CD8-positive, alpha-beta T cell (primary cell): ENCODE measurements at regions of chr21 and their contacts with region 1.

Region 1: GRCh38 chr21:33641336-33642026 is at the start of gene CRYZL1:
- DNase-seq: peak; percentile 100
- ATAC-seq: peak; percentile 78
- H3K4me3 ChIP-seq: peak within 1 kb of the TSS; percentile 83 to 95
- H3K4me3 Mint-ChIP-seq: peak within 1 kb of the TSS; percentile 90
- H3K27ac ChIP-seq: peak within 1 kb of the TSS; percentile 89 to 92
- H3K27ac Mint-ChIP-seq: peak within 1 kb of the TSS; percentile 92
- H3K4me1 ChIP-seq: peaks cover 15% of the 10 kb centered on the region
- H3K4me1 Mint-ChIP-seq: peaks cover 41% of the 10 kb centered on the region
- H3K27me3 ChIP-seq: no peaks in the 10 kb centered on the region
- H3K27me3 Mint-ChIP-seq: peaks cover 7% of the 10 kb centered on the region
- CTCF ChIP-seq: no peak
- total RNA-seq, gene CRYZL1: 19.9 to 21.8 TPM

Region 2: GRCh38 chr21:32612075-32612998 is 1029.1 kb before region 1 on chr21 and contains the start of gene CFAP298:
- CTCF ChIA-PET with region 1: no interaction called
- POLR2A ChIA-PET with region 1: no interaction called
- intact Hi-C with region 1: loop called (anchors 5 to 10 kb)
- DNase-seq: peak; percentile 76 to 98 (median 88)
- ATAC-seq: peak; percentile 91
- H3K4me3 ChIP-seq: peak within 1 kb of the TSS; percentile 65 to 74
- H3K4me3 Mint-ChIP-seq: peak within 1 kb of the TSS; percentile 96
- H3K27ac ChIP-seq: peak within 1 kb of the TSS; percentile 79 to 96
- H3K27ac Mint-ChIP-seq: peak within 1 kb of the TSS; percentile 97
- H3K4me1 ChIP-seq: peaks cover 21% of the 10 kb centered on the region
- H3K4me1 Mint-ChIP-seq: peaks cover 27% of the 10 kb centered on the region
- H3K27me3 ChIP-seq: no peaks in the 10 kb centered on the region
- H3K27me3 Mint-ChIP-seq: no peaks in the 10 kb centered on the region
- CTCF ChIP-seq: no peak
- total RNA-seq, gene CFAP298: 7.5 to 9.1 TPM

Region 3: DNA sequence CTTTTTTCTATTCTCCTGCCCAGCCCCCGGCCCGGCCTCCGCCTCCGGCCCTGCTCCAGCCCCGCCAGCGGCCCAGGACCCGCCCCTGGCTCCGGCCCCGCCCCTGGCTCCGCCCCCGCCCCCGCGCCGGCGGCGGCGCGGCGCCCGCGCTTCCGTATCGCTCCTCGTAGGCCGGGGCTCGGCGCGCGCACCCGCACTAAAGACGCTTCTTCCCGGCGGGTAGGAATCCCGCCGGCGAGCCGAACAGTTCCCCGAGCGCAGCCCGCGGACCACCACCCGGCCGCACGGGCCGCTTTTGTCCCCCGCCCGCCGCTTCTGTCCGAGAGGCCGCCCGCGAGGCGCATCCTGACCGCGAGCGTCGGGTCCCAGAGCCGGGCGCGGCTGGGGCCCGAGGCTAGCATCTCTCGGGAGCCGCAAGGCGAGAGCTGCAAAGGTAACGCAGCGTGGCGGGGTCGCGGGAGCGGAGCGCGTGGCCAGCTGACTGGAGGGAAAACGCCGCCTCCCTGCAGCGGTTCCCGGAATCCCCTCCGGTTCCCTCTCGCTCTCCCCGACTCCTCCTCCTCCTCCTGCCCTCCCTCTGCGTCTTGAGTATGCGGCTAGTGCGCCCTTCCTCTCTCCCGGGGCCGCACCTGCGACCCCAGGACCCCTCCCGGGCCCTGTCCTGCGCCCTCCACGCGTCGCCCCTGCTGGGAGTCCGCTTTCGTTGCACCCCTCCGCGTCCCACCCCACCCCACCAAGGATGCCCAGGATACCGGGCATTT is 411.5 kb before region 1 on chr21 and contains the start of gene IFNAR2:
- CTCF ChIA-PET with region 1: no interaction called
- POLR2A ChIA-PET with region 1: no interaction called
- intact Hi-C with region 1: loop called in 1 of 2 experiments (anchors 5 kb)
- DNase-seq: peak; percentile 56 to 85 (median 74)
- ATAC-seq: peak; percentile 86
- H3K4me3 ChIP-seq: peak within 1 kb of the TSS; percentile 90 to 97
- H3K4me3 Mint-ChIP-seq: peak within 1 kb of the TSS; percentile 92
- H3K27ac ChIP-seq: peak within 1 kb of the TSS; percentile 74 to 75
- H3K27ac Mint-ChIP-seq: peak within 1 kb of the TSS; percentile 95
- H3K4me1 ChIP-seq: peaks cover 46% of the 10 kb centered on the region
- H3K4me1 Mint-ChIP-seq: peaks cover 51% of the 10 kb centered on the region
- H3K27me3 ChIP-seq: no peaks in the 10 kb centered on the region
- H3K27me3 Mint-ChIP-seq: no peaks in the 10 kb centered on the region
- CTCF ChIP-seq: no peak
- total RNA-seq, gene IFNAR2: 21.9 to 30.0 TPM

Region 4: DNA sequence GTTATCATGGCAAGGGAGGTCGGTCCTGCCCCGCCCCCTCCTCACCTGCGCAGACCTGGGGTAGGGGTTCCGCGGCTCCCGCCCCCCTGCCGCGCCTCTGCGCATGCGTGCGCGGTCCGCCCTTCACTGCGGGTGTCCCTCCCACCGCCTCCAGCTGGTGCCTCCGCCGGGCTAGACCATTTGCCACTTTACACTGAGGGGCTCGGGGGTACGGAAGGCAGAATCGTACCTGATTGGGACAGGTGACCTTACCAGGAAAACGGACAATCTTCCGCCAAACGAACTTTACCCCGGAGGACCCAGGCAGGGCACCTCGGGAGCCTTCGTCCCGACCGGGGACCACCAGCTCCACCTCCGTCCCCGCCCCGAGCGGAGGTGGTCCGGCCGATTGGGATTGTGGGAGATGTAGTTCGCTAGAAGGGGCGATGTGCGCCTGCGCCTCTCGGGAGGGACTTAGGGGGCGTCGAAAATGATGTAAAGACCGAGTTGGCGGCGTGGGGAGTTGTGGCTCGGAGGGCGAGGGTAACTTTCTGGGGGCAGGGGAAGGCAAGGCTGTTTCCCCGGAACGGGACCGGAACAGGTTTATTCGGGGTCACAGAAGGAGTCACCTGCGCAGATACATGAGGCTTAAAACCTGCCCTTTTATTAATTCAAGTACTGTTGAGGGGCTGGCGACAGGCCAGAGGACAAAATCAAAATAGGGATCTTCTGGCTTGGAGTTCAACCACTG is 149.9 kb before region 1 on chr21 and contains the start of gene DNAJC28:
- CTCF ChIA-PET with region 1: no interaction called
- POLR2A ChIA-PET with region 1: no interaction called
- intact Hi-C with region 1: loop called in 1 of 2 experiments (anchors 1 kb)
- DNase-seq: peak; percentile 87 to 98 (median 95)
- ATAC-seq: peak; percentile 97
- H3K4me3 ChIP-seq: peak within 1 kb of the TSS; percentile 81 to 95
- H3K4me3 Mint-ChIP-seq: peak within 1 kb of the TSS; percentile 92
- H3K27ac ChIP-seq: peak within 1 kb of the TSS; percentile 60 to 73
- H3K27ac Mint-ChIP-seq: peak within 1 kb of the TSS; percentile 94
- H3K4me1 ChIP-seq: peaks cover 9% of the 10 kb centered on the region
- H3K4me1 Mint-ChIP-seq: peaks cover 11% of the 10 kb centered on the region
- H3K27me3 ChIP-seq: no peaks in the 10 kb centered on the region
- H3K27me3 Mint-ChIP-seq: no peaks in the 10 kb centered on the region
- CTCF ChIP-seq: no peak
- total RNA-seq, gene DNAJC28: 0.22 to 0.33 TPM

Region 5: DNA sequence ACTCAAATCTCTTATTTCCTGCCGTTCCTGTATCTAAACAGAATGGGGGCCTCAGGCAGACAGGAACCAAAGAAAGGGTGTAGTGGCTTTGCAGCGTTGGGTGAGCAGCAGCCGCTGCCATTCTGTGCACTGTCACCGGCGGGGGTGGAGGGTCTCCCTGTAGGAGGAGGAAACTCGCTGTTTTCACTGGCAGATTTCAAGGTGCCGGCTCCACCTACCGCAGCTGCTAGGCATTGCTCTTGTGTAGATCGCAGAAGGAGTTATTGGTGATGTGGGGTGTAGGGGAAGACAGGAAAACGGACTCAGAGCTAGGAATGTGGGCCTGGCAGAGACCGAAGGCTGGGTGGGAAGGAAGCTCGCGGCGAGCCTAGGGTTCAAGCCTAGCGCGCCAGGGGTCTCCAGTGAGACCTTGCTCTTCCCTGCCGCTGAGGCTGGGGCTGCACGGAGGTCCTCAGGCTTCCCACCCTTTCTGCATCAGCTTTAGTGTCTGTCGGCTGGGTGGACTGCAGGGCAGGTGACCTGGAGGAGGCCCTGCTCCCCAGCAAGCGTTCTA is 253.3 kb after region 1 on chr21:
- CTCF ChIA-PET with region 1: interaction called, 4 read pairs
- POLR2A ChIA-PET with region 1: no interaction called
- intact Hi-C with region 1: loop called in 1 of 2 experiments (anchors 5 kb)
- DNase-seq: peak; percentile 27 to 82 (median 69)
- ATAC-seq: peak; percentile 100
- H3K4me3 ChIP-seq: peak overlapping the region; percentile 7 to 33
- H3K4me3 Mint-ChIP-seq: peak overlapping the region; percentile 85
- H3K27ac ChIP-seq: no peak overlapping the region
- H3K27ac Mint-ChIP-seq: peak overlapping the region; percentile 85
- H3K4me1 ChIP-seq: peaks cover 7% of the 10 kb centered on the region
- H3K4me1 Mint-ChIP-seq: peaks cover 16% of the 10 kb centered on the region
- H3K27me3 ChIP-seq: no peaks in the 10 kb centered on the region
- H3K27me3 Mint-ChIP-seq: no peaks in the 10 kb centered on the region
- CTCF ChIP-seq: peak; percentile 38

Region 6: GRCh38 chr21:34614633-34615486 is 973.4 kb after region 1 on chr21 and contains the start of gene RCAN1:
- CTCF ChIA-PET with region 1: no interaction called
- POLR2A ChIA-PET with region 1: no interaction called
- intact Hi-C with region 1: loop called in 1 of 2 experiments (anchors 2 kb)
- DNase-seq: peak; percentile 64 to 94 (median 85)
- ATAC-seq: peak; percentile 95
- H3K4me3 ChIP-seq: peak within 1 kb of the TSS; percentile 51 to 63
- H3K4me3 Mint-ChIP-seq: peak within 1 kb of the TSS; percentile 90
- H3K27ac ChIP-seq: peak within 1 kb of the TSS; percentile 41 to 68
- H3K27ac Mint-ChIP-seq: peak within 1 kb of the TSS; percentile 91
- H3K4me1 ChIP-seq: peaks cover 13% of the 10 kb centered on the region
- H3K4me1 Mint-ChIP-seq: peaks cover 21% of the 10 kb centered on the region
- H3K27me3 ChIP-seq: no peaks in the 10 kb centered on the region
- H3K27me3 Mint-ChIP-seq: no peaks in the 10 kb centered on the region
- CTCF ChIP-seq: no peak
- total RNA-seq, gene RCAN1: 0.73 to 1.0 TPM